AG04449 (cell line): ENCODE measurements at regions of chr13 and their contacts with region 1.

Region 1: DNA sequence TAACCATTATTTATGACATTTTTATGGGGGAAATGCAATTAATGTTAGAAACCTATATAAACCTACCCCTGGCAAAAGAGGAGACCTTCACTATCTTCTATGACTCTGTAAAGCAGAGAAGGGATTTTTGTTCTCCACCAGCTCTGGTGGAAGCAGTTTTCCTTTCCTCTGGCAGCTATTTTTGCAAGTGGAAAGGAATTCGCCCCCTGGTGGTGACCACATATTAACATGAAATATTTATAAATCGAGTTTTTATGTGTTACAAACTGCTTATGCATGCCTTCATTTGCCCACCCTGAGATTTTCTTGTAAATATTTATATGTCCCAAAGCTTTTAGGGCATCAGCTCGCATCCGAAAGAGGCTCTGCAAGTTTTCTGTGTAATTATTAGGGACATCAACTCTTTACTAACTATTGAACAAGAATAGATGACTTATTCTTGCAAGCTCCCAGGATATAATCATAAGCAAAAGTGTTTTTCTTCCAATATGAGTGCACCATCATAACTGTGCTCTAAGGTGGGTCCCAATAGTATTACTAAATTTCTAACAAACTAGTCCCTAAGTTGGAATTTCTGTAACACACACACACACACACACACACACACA is 62.4 kb downstream of the SERTM1 start:
- DNase-seq: peak; percentile 14
- H3K4me3 ChIP-seq: no peak overlapping the region
- CTCF ChIP-seq: peak; percentile 42

Region 2: DNA sequence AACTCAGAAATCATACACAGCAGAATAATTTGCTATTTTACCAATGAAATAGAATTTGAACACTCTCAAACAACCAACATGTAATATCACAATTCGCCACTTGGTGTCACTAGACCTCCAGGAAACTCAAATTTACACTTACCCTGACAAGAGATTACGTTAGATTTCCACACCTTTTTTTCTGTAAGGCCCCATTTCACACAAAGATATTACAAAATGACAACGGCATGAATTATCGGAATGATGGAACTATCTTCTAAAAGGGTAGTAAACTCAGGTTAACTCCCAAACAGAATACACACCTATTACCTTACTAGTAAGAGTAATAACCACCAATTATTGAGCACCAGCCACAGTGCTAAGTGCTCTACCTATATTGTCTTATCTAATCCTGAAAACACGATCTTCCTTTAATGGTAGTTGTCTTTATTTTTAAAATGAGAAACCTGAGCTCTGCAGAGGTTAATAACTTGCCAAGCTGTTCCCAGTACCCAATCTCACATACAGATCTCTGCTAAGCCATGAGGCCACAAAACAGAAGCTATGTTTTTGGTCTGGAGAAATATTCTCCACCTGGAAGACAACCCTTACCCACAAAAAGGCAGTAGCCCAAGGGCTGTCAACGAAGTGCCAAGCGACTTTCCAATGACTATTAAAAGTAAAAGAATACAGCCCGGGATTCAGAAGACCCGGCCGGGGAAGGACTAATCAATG is 757.5 kb before region 1 on chr13:
- CTCF ChIA-PET with region 1: interaction called, 19 read pairs
- POLR2A ChIA-PET with region 1: no interaction called
- DNase-seq: no peak
- H3K4me3 ChIP-seq: no peak overlapping the region
- CTCF ChIP-seq: peak; percentile 46

Region 3: GRCh38 chr13:36420437-36420891 is 315.8 kb before region 1 on chr13:
- CTCF ChIA-PET with region 1: interaction called, 53 read pairs
- POLR2A ChIA-PET with region 1: no interaction called
- DNase-seq: no peak
- H3K4me3 ChIP-seq: no peak overlapping the region
- CTCF ChIP-seq: peak; percentile 76

Region 4: DNA sequence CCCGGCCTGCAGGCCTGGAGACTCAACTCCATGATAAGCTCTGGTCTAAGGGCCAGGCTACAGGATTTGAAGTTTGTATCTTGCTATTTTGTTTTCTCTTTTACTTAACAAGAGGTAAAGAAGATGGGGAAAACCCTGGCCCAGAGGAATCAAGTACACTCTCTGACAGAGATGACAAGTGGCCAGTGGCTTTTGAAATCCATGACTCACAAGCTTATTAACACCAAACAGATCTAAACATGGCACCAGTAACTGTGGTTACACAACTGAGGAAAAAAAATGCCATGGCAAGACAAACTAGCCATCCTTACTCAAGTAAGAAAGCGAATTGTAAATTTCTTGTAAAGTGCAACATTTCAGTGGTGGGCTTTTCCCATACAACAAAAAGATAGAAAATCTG is 135.0 kb before region 1 on chr13:
- CTCF ChIA-PET with region 1: no interaction called
- POLR2A ChIA-PET with region 1: no interaction called
- DNase-seq: no peak
- H3K4me3 ChIP-seq: no peak overlapping the region
- CTCF ChIP-seq: no peak

Region 5: GRCh38 chr13:36680913-36681312 is 55.3 kb before region 1 on chr13:
- CTCF ChIA-PET with region 1: interaction called, 11 read pairs
- POLR2A ChIA-PET with region 1: no interaction called
- DNase-seq: no peak
- H3K4me3 ChIP-seq: no peak overlapping the region
- CTCF ChIP-seq: no peak

Region 6: GRCh38 chr13:36717966-36718545 is 18.2 kb before region 1 on chr13:
- CTCF ChIA-PET with region 1: interaction called, 57 read pairs
- POLR2A ChIA-PET with region 1: no interaction called
- DNase-seq: no peak
- H3K4me3 ChIP-seq: no peak overlapping the region
- CTCF ChIP-seq: no peak

Region 7: GRCh38 chr13:36752673-36753072 is 16.4 kb after region 1 on chr13:
- CTCF ChIA-PET with region 1: interaction called, 14 read pairs
- POLR2A ChIA-PET with region 1: no interaction called
- DNase-seq: no peak
- H3K4me3 ChIP-seq: no peak overlapping the region
- CTCF ChIP-seq: no peak